Panc1 (cell line): ENCODE measurements at regions of chr2 and their contacts with region 1.

Region 1: DNA sequence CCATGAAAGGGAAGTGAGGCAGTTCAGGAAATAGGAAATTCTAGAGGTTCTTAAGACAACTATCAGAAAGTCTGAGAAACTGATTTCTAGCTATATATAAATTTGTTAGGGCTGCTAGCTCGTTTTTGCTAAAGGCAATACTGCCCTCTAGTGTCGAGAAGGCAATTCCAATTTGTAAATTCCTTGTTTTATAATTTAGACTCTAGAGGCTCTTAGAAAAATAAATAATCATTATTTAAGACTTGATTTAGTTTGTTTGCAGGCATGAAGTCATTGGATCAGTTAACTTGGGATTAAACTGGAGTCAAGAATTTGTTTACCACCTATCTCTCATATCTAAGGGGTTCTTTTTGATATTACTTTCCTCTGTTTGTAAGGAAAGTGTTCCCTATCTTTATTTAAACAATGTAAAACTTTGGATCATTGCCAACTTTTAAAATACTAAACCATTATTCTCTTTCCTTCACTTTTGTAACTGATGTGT is 66.2 kb downstream of the ACVR2A start:
- DNase-seq: peak; percentile 28
- ATAC-seq: peak; percentile 51; the same call in 1 of the 2 replicates
- H3K4me3 ChIP-seq: no peak overlapping the region
- H3K27ac ChIP-seq: no peak overlapping the region
- H3K4me1 ChIP-seq: no peaks in the 10 kb centered on the region
- H3K27me3 ChIP-seq: no peaks in the 10 kb centered on the region
- CTCF ChIP-seq: peak; percentile 69; the same call in 1 of the 2 replicates

Region 2: GRCh38 chr2:146734042-146734820 is 1176.8 kb before region 1 on chr2:
- CTCF ChIA-PET with region 1: no interaction called
- POLR2A ChIA-PET with region 1: no interaction called
- in situ Hi-C with region 1: no loop called
- intact Hi-C with region 1: loop called (anchors 5 kb)
- DNase-seq: peak; percentile 2
- ATAC-seq: peak; percentile 76; the same call in 1 of the 2 replicates
- H3K4me3 ChIP-seq: no peak overlapping the region
- H3K27ac ChIP-seq: no peak overlapping the region
- H3K4me1 ChIP-seq: no peaks in the 10 kb centered on the region
- H3K27me3 ChIP-seq: no peaks in the 10 kb centered on the region
- CTCF ChIP-seq: peak; percentile 48; the same call in 1 of the 2 replicates

Region 3: DNA sequence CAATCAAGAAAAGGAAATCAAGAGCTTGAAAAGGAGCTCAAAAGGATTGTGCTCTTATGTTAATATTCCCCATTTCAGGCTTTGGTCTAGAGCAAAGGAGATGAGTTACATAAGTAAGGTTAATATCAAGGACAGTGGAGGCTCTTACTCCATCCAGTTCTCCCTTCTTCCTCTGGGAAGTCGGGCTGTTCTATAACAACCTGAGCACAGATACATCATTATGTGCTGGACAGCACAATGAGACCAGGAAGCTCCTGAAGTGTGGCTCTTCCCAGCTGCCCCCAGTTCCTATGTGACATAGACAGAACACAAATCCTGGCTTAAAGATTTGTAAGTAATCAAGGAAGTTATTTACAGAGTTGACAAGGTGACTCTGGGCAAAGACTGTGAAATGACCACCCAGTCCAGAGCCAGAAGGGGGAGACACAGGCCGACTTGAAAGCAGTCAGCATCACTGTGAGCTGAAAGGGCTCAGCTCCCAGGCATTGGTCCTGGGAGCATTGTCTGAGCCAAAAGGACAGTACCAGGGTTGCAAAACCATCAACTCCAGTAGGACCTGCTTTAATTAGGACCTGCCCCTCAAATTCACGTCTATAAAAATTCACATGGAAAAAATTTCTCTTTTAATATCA is 983.8 kb before region 1 on chr2:
- CTCF ChIA-PET with region 1: no interaction called
- POLR2A ChIA-PET with region 1: no interaction called
- in situ Hi-C with region 1: no loop called
- intact Hi-C with region 1: loop called (anchors 5 kb)
- DNase-seq: peak; percentile 12
- ATAC-seq: peak; percentile 63; the same call in 1 of the 2 replicates
- H3K4me3 ChIP-seq: no peak overlapping the region
- H3K27ac ChIP-seq: no peak overlapping the region
- H3K4me1 ChIP-seq: no peaks in the 10 kb centered on the region
- H3K27me3 ChIP-seq: no peaks in the 10 kb centered on the region
- CTCF ChIP-seq: peak; percentile 53

Region 4: DNA sequence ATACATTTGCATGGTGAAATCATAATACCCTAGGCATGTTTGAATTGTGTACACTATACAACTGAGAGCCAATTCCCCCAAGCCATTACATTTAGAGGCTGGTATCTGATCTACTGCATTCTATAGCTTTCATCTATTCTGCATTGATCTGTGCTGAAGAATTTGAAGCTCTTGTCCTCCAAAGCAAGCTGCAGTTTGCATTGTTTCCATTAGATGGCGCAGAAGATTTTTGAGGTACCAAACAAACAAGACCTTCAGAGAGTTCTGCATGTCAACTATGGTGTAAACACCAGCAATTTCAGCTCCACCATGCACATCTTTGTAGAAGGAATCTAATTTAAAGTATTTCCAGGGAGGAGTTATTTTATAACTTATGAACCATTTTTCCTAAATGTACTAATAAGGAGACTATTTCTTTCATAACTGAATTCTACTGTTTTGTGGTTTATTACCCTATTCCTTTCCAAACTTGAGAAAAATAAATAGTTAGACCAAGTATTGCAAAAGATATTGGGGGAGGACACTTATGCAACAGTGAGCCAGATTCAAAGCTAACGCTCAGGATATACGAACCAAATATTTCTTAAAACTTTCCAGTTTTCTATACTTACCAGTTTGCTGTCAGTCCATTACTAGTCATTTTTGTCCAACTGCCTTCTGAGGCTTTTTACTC is 828.0 kb before region 1 on chr2:
- CTCF ChIA-PET with region 1: no interaction called
- POLR2A ChIA-PET with region 1: no interaction called
- in situ Hi-C with region 1: no loop called
- intact Hi-C with region 1: loop called (anchors 10 kb)
- DNase-seq: peak; percentile 50
- ATAC-seq: no peak
- H3K4me3 ChIP-seq: no peak overlapping the region
- H3K27ac ChIP-seq: no peak overlapping the region
- H3K4me1 ChIP-seq: no peaks in the 10 kb centered on the region
- H3K27me3 ChIP-seq: no peaks in the 10 kb centered on the region
- CTCF ChIP-seq: peak; percentile 77

Region 5: GRCh38 chr2:147689220-147689909 is 221.7 kb before region 1 on chr2:
- CTCF ChIA-PET with region 1: no interaction called
- POLR2A ChIA-PET with region 1: no interaction called
- in situ Hi-C with region 1: no loop called
- intact Hi-C with region 1: no loop called
- DNase-seq: no peak
- ATAC-seq: no peak
- H3K4me3 ChIP-seq: no peak overlapping the region
- H3K27ac ChIP-seq: no peak overlapping the region
- H3K4me1 ChIP-seq: no peaks in the 10 kb centered on the region
- H3K27me3 ChIP-seq: no peaks in the 10 kb centered on the region
- CTCF ChIP-seq: no peak

Region 6: GRCh38 chr2:147855977-147856376 is 55.1 kb before region 1 on chr2:
- CTCF ChIA-PET with region 1: no interaction called
- POLR2A ChIA-PET with region 1: no interaction called
- in situ Hi-C with region 1: no loop called
- intact Hi-C with region 1: no loop called
- DNase-seq: no peak
- ATAC-seq: no peak
- H3K4me3 ChIP-seq: no peak overlapping the region
- H3K27ac ChIP-seq: no peak overlapping the region
- H3K4me1 ChIP-seq: no peaks in the 10 kb centered on the region
- H3K27me3 ChIP-seq: no peaks in the 10 kb centered on the region
- CTCF ChIP-seq: no peak

Region 7: DNA sequence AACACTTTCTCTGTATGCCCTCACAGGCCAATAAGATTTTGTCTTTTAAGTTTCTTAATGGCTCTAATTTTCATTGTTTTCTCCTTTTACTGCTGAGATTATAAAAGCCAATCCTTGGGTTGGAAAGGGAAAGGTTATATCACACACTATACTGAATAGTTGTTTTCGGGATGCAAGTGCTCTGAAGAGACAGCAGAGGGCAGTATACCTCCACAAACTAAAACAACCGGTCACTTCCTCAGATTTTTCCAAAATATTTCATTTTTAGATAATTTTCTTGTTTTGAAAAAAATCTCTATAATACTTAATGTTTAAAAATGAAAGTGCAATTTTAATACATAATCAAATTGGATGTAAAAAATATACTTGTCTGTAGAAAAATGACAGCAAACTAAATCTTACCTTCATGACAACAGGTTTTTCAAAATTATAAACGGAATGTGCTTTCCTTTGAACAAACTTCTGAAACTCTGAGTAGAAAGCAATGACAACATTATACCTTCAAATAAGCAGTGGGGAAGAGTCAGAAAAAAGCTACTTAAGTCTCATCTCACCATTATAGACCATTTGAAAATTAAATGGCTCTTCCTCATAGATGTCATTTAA is 26.8 kb after region 1 on chr2:
- CTCF ChIA-PET with region 1: no interaction called
- POLR2A ChIA-PET with region 1: no interaction called
- in situ Hi-C with region 1: no loop called
- intact Hi-C with region 1: no loop called
- DNase-seq: peak; percentile 15
- ATAC-seq: no peak
- H3K4me3 ChIP-seq: no peak overlapping the region
- H3K27ac ChIP-seq: no peak overlapping the region
- H3K4me1 ChIP-seq: no peaks in the 10 kb centered on the region
- H3K27me3 ChIP-seq: no peaks in the 10 kb centered on the region
- CTCF ChIP-seq: peak; percentile 79; the same call in 1 of the 2 replicates